ENCODE measurements at regions of chr6 and their contacts with region 1.

Region 1: GRCh38 chr6:138817822-138818308 is 22.0 kb downstream of the ECT2L start:
- DNase-seq: peak; percentile 34
- CTCF ChIP-seq: no peak

Region 2: DNA sequence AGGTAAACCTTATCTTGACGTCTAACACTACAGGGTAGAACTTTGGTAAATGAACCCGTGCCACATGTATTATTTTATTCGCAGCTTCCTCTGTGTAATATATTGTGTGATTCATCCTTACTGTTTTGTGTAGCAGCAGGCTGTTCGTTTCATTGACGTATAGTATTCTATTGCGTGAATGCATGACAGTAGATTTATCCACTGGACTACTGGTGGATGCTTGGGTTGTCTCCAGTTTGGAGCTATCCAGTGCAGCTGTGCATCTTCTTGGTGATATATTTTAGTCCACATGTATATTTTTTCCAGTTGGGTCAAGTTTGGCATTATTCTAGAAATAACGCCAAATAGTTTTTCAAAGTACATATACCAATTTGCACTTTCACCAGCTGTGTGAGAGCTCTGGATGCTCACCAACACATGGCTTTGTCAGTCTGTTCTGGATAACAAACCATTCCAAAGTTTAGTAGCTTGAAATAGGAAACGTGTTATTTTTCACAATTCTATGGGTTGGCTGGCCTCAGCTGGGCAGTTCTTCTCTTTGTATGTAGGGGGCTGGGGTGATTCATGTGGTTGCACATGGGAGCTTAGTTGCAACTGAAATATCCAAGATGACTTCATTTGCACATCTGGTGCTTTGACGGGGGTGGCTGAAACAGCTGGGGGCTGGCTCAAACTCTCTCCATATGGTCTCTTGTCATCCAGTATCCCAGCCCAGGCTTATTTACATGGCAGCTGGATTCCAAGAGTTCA is 12.7 kb before region 1 on chr6:
- CTCF ChIA-PET with region 1: interaction called, 29 read pairs
- POLR2A ChIA-PET with region 1: no interaction called
- DNase-seq: no peak
- CTCF ChIP-seq: no peak

Region 3: GRCh38 chr6:138882369-138883017 is 64.6 kb after region 1 on chr6:
- CTCF ChIA-PET with region 1: interaction called, 17 read pairs
- POLR2A ChIA-PET with region 1: no interaction called
- DNase-seq: peak; percentile 52
- CTCF ChIP-seq: no peak

Measured in GM10248 (cell line).